Common myeloid progenitor, CD34-positive (primary cell): ENCODE measurements at regions of chr7 and their contacts with region 1.

Region 1: GRCh38 chr7:55552320-55553023 is 19.8 kb downstream of the VOPP1 start:
- DNase-seq: peak; percentile 80 to 91 (median 88)
- H3K4me3 ChIP-seq: peak overlapping the region in 3 of 7 experiments; percentile 4 to 67 (median 14)
- H3K27ac ChIP-seq: peak overlapping the region in 1 of 2 experiments; percentile 57
- H3K4me1 ChIP-seq: peaks cover 6 to 38% (median 20%) of the 10 kb centered on the region in 4 experiments
- H3K27me3 ChIP-seq: no peaks in the 10 kb centered on the region

Region 2: GRCh38 chr7:55534175-55534915 is 18.1 kb before region 1 on chr7:
- CTCF ChIA-PET with region 1: interaction called, 28 read pairs
- POLR2A ChIA-PET with region 1: interaction called, 9 read pairs
- DNase-seq: peak; percentile 59 to 95 (median 94)
- H3K4me3 ChIP-seq: peak overlapping the region in 1 of 7 experiments; percentile 18
- H3K27ac ChIP-seq: peak overlapping the region in 1 of 2 experiments; percentile 70
- H3K4me1 ChIP-seq: peaks cover 10 to 65% (median 52%) of the 10 kb centered on the region in 4 experiments
- H3K27me3 ChIP-seq: no peaks in the 10 kb centered on the region

Region 3: GRCh38 chr7:55567571-55567970 is 15.1 kb after region 1 on chr7:
- CTCF ChIA-PET with region 1: interaction called, 11 read pairs
- POLR2A ChIA-PET with region 1: interaction called, 8 read pairs
- DNase-seq: no peak
- H3K4me3 ChIP-seq: no peak overlapping the region
- H3K27ac ChIP-seq: no peak overlapping the region
- H3K4me1 ChIP-seq: peaks cover 6 to 30% (median 21%) of the 10 kb centered on the region in 4 experiments
- H3K27me3 ChIP-seq: no peaks in the 10 kb centered on the region

Region 4: DNA sequence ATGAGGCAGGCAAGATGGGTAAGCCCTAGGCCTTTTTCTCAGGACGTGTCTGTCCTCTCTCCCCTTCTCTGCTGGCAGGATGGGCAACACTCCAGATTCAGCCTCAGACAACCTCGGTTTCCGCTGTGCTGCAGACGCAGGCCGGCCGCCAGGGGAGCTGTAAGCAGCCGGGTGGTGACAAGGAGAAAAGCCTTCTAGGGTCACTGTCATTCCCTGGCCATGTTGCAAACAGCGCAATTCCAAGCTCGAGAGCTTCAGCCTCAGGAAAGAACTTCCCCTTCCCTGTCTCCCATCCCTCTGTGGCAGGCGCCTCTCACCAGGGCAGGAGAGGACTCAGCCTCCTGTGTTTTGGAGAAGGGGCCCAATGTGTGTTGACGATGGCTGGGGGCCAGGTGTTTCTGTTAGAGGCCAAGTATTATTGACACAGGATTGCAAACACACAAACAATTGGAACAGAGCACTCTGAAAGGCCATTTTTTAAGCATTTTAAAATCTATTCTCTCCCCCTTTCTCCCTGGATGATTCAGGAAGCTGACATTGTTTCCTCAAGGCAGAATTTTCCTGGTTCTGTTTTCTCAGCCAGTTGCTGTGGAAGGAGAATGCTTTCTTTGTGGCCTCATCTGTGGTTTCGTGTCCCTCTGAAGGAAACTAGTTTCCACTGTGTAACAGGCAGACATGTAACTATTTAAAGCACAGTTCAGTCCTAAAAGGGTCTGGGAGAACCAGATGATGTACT is 527.1 kb after region 1 on chr7:
- CTCF ChIA-PET with region 1: no interaction called
- POLR2A ChIA-PET with region 1: no interaction called
- DNase-seq: peak in 1 of 3 donors; percentile 31
- H3K4me3 ChIP-seq: no peak overlapping the region
- H3K27ac ChIP-seq: peak overlapping the region in 1 of 2 experiments; percentile 56
- H3K4me1 ChIP-seq: peaks cover 0 to 10% (median 4%) of the 10 kb centered on the region in 4 experiments
- H3K27me3 ChIP-seq: no peaks in the 10 kb centered on the region